Activated CD8-positive, alpha-beta T cell treated with anti-CD3 and anti-CD28 coated beads for 36 hours (primary cell): ENCODE measurements at regions of chr1 and their contacts with region 1.

Region 1: GRCh38 chr1:110209715-110210603 is at the start of gene KCNC4:
- DNase-seq: peak; percentile 93
- ATAC-seq: peak; percentile 90
- H3K4me3 Mint-ChIP-seq: peak within 1 kb of the TSS; percentile 87
- H3K27ac Mint-ChIP-seq: peak within 1 kb of the TSS; percentile 85
- H3K4me1 Mint-ChIP-seq: peaks cover 44% of the 10 kb centered on the region
- H3K27me3 Mint-ChIP-seq: no peaks in the 10 kb centered on the region
- CTCF ChIP-seq: no peak
- total RNA-seq, gene KCNC4: 10.7 to 12.2 TPM

Region 2: GRCh38 chr1:110150330-110151174 is 59.4 kb before region 1 on chr1 and contains the start of gene SLC6A17:
- CTCF ChIA-PET with region 1: no interaction called
- POLR2A ChIA-PET with region 1: no interaction called
- intact Hi-C with region 1: no loop called
- DNase-seq: peak; percentile 69
- ATAC-seq: peak; percentile 88
- H3K4me3 Mint-ChIP-seq: no peak within 1 kb of the TSS
- H3K27ac Mint-ChIP-seq: no peak within 1 kb of the TSS
- H3K4me1 Mint-ChIP-seq: peaks cover 3% of the 10 kb centered on the region
- H3K27me3 Mint-ChIP-seq: peaks cover 45% of the 10 kb centered on the region
- CTCF ChIP-seq: no peak
- total RNA-seq, gene SLC6A17: 0.05 to 0.18 TPM

Region 3: GRCh38 chr1:110196917-110197765 is 12.8 kb before region 1 on chr1:
- CTCF ChIA-PET with region 1: interaction called, 37 read pairs
- POLR2A ChIA-PET with region 1: interaction called, 3 read pairs
- intact Hi-C with region 1: no loop called
- DNase-seq: peak; percentile 61
- ATAC-seq: peak; percentile 100
- H3K4me3 Mint-ChIP-seq: no peak overlapping the region
- H3K27ac Mint-ChIP-seq: no peak overlapping the region
- H3K4me1 Mint-ChIP-seq: no peaks in the 10 kb centered on the region
- H3K27me3 Mint-ChIP-seq: no peaks in the 10 kb centered on the region
- CTCF ChIP-seq: peak; percentile 88

Region 4: DNA sequence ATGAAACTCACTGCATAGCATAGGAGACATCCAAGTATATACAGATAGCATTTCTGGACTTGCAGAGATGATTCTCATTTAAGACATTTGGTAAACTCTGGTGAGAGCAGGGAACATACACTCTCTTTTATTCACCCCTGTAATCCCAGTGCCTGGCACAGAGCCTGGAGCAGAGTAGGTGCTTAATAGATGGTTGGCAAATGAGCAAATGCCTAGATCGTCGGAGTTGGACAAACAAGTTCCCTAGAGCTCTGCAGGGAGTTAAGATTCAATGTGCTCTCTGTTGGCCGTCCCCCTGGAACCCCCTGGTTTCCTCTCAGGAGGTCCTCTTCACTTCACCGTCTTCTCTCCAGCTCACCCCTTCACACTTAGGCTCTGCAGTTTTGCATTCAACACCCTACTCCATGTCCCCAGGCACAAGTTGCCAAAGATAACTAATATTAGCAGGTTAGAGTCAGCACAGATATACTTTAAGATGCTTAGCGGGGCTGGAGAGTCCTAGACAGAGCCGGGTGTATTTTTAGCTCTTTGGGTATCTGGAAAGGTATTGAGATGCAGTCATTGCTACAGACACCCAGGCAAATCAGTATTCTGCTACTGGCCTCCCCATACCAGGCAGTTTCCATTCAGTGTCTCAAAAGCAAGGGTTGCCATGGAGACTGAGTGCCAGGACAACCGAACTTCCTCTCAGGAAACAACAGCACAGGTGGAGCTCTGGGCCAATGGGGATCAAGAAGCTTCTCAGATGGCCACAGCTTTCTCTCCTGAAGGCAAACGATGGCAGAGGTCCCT is 45.2 kb after region 1 on chr1:
- CTCF ChIA-PET with region 1: interaction called, 10 read pairs
- POLR2A ChIA-PET with region 1: interaction called, 3 read pairs
- intact Hi-C with region 1: no loop called
- DNase-seq: no peak
- ATAC-seq: peak; percentile 39
- H3K4me3 Mint-ChIP-seq: no peak overlapping the region
- H3K27ac Mint-ChIP-seq: no peak overlapping the region
- H3K4me1 Mint-ChIP-seq: no peaks in the 10 kb centered on the region
- H3K27me3 Mint-ChIP-seq: no peaks in the 10 kb centered on the region
- CTCF ChIP-seq: no peak

Region 5: DNA sequence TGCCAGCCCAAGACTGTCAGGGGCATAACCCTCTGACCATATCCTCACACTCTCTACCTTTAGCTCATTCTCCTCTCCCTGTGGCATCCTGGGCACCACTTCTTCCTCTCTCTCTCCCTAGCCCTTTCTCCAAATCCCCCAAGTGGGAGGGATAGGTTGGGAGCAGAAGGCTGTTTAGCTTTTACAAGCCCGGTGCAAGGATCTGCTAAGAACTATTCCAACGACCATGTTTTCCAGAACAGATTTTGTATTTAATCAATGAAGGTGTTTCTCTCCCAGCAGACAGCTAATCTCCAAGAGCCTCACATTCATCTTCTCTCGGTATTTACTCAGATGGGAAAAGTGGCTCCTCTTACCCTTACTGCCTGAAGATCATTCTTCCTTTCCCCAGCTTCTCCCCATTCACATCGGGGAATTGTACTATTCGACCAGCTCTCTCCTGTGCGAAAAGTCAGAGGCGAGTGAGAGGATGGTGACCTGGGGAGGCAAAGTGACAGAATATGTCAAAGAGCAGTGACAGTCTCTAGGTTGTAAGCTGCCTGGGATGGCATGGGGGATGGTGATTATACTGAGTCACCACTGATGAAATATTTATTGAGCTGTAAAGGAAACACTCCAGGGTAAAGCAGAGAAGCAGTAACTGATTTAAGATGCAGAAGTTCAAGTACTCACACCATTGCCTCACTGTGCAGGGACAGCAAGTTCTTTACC is 82.2 kb after region 1 on chr1:
- CTCF ChIA-PET with region 1: interaction called, 26 read pairs
- POLR2A ChIA-PET with region 1: no interaction called
- intact Hi-C with region 1: no loop called
- DNase-seq: no peak
- ATAC-seq: no peak
- H3K4me3 Mint-ChIP-seq: no peak overlapping the region
- H3K27ac Mint-ChIP-seq: no peak overlapping the region
- H3K4me1 Mint-ChIP-seq: no peaks in the 10 kb centered on the region
- H3K27me3 Mint-ChIP-seq: no peaks in the 10 kb centered on the region
- CTCF ChIP-seq: no peak

Region 6: GRCh38 chr1:110338886-110339406 is 129.0 kb after region 1 on chr1 and contains the start of gene RBM15:
- CTCF ChIA-PET with region 1: interaction called, 153 read pairs
- POLR2A ChIA-PET with region 1: interaction called, 64 read pairs
- intact Hi-C with region 1: no loop called
- DNase-seq: peak; percentile 98
- ATAC-seq: peak; percentile 80
- H3K4me3 Mint-ChIP-seq: no peak within 1 kb of the TSS
- H3K27ac Mint-ChIP-seq: no peak within 1 kb of the TSS
- H3K4me1 Mint-ChIP-seq: peaks cover 49% of the 10 kb centered on the region
- H3K27me3 Mint-ChIP-seq: no peaks in the 10 kb centered on the region
- CTCF ChIP-seq: no peak
- total RNA-seq, gene RBM15: 70.8 to 72.5 TPM

Region 7: GRCh38 chr1:110412576-110412975 is 202.6 kb after region 1 on chr1:
- CTCF ChIA-PET with region 1: interaction called, 29 read pairs
- POLR2A ChIA-PET with region 1: no interaction called
- intact Hi-C with region 1: no loop called
- DNase-seq: peak; percentile 75
- ATAC-seq: peak; percentile 52
- H3K4me3 Mint-ChIP-seq: no peak overlapping the region
- H3K27ac Mint-ChIP-seq: no peak overlapping the region
- H3K4me1 Mint-ChIP-seq: peaks cover 10% of the 10 kb centered on the region
- H3K27me3 Mint-ChIP-seq: no peaks in the 10 kb centered on the region
- CTCF ChIP-seq: peak; percentile 72

Region 8: DNA sequence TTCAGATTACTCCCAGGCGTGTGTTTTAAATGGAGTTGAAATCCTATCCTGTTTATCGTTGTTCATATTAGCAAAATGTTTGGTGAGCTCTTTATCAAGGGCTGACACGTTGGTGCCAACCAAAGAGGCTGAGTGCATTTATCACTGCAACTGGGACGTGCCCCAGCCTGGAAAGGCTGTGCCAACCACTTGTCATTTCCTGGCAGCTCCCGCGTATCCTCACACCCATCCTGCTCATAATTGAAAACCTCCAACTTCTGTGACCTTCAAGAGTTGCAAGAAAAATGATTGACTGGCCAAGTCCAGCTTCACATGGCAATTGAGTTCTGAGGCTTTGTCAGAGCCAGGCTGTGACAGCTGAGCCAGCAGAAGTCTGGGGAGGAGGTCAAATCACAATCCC is 508.5 kb after region 1 on chr1:
- CTCF ChIA-PET with region 1: no interaction called
- POLR2A ChIA-PET with region 1: no interaction called
- intact Hi-C with region 1: no loop called
- DNase-seq: no peak
- ATAC-seq: no peak
- H3K4me3 Mint-ChIP-seq: no peak overlapping the region
- H3K27ac Mint-ChIP-seq: no peak overlapping the region
- H3K4me1 Mint-ChIP-seq: peaks cover 4% of the 10 kb centered on the region
- H3K27me3 Mint-ChIP-seq: no peaks in the 10 kb centered on the region
- CTCF ChIP-seq: no peak